ENCODE measurements at regions of chr4 and their contacts with region 1.

Region 1: DNA sequence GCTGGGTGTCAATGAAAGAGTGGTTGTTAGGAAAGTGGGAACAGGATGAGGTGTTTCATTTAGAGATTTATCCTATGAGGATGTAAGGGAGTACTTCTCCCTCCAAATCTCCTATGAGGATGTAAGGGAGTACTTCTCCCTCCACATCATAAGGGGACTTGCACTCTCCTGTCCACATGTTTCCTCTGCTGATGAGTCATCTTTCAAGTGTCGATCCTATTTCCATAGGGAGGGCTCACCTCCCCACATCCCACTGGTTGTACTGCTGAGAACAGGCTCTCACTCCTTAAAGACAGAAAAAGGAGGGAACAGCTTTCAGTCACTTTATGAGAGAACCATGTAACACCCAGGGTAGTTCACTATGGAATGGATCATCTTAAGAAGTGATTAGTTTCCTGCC is 65.0 kb downstream of the INPP4B start:
- DNase-seq: no peak
- H3K4me3 ChIP-seq: no peak overlapping the region
- H3K27ac ChIP-seq: no peak overlapping the region
- H3K4me1 ChIP-seq: no peaks in the 10 kb centered on the region
- H3K27me3 ChIP-seq: no peaks in the 10 kb centered on the region
- CTCF ChIP-seq: no peak
- POLR2A ChIP-seq: no peak

Region 2: DNA sequence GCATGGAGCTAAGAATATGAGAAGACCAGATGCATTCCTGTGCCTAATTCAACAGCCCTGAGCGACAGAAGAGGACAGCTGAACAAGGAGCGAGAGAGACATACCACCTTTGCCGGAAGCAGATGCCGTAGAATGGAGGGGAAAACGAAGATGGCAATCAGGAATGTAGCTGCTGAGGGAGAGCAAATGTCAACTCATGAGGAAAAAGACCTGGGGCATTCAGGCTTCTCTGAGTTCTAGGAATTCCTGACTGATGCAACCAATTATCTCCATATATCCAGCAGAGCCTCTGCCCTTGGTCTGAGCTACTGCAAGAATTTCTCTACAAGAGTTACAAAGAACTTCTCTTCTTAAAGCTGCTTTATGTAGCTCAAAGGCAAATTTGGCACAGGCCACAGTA is 105.4 kb after region 1 on chr4:
- intact Hi-C with region 1: loop called (anchors 5 kb)
- DNase-seq: no peak
- H3K4me3 ChIP-seq: no peak overlapping the region
- H3K27ac ChIP-seq: no peak overlapping the region
- H3K4me1 ChIP-seq: no peaks in the 10 kb centered on the region
- H3K27me3 ChIP-seq: no peaks in the 10 kb centered on the region
- CTCF ChIP-seq: no peak
- POLR2A ChIP-seq: no peak

Measured in vagina (tissue), 2 donors.